Posterior cingulate gyrus (tissue), 11 donors: ENCODE measurements at regions of chr3 and their contacts with region 1.

Region 1: GRCh38 chr3:165206454-165207266 is 10.5 kb upstream of the SLITRK3 start:
- DNase-seq: peak; percentile 65 to 97 (median 82)

Region 2: GRCh38 chr3:165144271-165144670 is 62.4 kb before region 1 on chr3:
- intact Hi-C with region 1: no loop called
- DNase-seq: no peak

Region 3: GRCh38 chr3:165439765-165440164 is 233.1 kb after region 1 on chr3:
- intact Hi-C with region 1: no loop called
- DNase-seq: no peak

Region 4: DNA sequence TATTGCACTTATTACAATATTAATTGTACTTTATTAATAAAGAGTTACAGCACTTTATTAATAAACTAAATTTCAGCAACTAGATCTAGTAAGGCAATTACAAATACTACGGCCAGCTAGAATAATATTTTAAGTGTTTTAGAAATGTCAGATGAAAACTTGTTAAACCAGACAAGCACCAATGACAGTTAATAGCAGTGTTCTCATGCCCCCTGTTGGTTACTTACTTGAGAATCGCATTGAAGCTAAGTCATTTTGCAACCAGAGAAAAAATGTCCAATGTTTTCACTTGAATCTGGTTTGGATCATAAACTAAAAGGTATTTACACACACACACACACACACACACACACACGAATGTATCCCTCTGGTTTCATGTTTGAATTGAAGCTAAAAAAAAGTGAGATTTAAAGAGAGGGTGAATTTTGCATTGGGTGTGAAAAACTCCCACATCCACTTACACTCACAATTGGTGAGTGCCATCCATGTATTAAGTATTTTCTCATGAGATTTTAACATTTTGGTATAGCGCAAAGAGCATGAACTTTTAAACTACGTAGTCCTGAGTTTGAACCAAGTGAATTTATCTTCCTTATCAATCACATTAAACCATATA is 1825.7 kb after region 1 on chr3:
- intact Hi-C with region 1: loop called (anchors 5 kb)
- DNase-seq: no peak

Region 5: GRCh38 chr3:167151636-167152035 is 1945.0 kb after region 1 on chr3:
- intact Hi-C with region 1: loop called (anchors 10 kb)
- DNase-seq: no peak